ENCODE measurements at regions of chr9 and their contacts with region 1.

Region 1: GRCh38 chr9:37903647-37904444 is at the start of gene SLC25A51:
- ATAC-seq: peak; percentile 68 to 94 (median 92)
- H3K4me3 ChIP-seq: peak within 1 kb of the TSS; percentile 61 to 98 (median 65)
- H3K27ac ChIP-seq: peak within 1 kb of the TSS; percentile 71 to 81
- H3K4me1 ChIP-seq: peaks cover 9 to 12% of the 10 kb centered on the region in 2 donors
- total RNA-seq, gene SLC25A51: 23.9 to 40.0 (median 29.5) TPM

Region 2: GRCh38 chr9:37485389-37486219 is 418.2 kb before region 1 on chr9 and contains the start of gene POLR1E:
- in situ Hi-C with region 1: loop called in 1 of 9 experiments (anchors 25 kb)
- ATAC-seq: peak; percentile 85 to 96 (median 94)
- H3K4me3 ChIP-seq: peak within 1 kb of the TSS; percentile 49 to 65 (median 57)
- H3K27ac ChIP-seq: peak within 1 kb of the TSS in 1 of 2 donors; percentile 2
- H3K4me1 ChIP-seq: peaks cover 11 to 13% of the 10 kb centered on the region in 2 donors
- total RNA-seq, gene POLR1E: 19.4 to 35.4 (median 24.9) TPM

Region 3: DNA sequence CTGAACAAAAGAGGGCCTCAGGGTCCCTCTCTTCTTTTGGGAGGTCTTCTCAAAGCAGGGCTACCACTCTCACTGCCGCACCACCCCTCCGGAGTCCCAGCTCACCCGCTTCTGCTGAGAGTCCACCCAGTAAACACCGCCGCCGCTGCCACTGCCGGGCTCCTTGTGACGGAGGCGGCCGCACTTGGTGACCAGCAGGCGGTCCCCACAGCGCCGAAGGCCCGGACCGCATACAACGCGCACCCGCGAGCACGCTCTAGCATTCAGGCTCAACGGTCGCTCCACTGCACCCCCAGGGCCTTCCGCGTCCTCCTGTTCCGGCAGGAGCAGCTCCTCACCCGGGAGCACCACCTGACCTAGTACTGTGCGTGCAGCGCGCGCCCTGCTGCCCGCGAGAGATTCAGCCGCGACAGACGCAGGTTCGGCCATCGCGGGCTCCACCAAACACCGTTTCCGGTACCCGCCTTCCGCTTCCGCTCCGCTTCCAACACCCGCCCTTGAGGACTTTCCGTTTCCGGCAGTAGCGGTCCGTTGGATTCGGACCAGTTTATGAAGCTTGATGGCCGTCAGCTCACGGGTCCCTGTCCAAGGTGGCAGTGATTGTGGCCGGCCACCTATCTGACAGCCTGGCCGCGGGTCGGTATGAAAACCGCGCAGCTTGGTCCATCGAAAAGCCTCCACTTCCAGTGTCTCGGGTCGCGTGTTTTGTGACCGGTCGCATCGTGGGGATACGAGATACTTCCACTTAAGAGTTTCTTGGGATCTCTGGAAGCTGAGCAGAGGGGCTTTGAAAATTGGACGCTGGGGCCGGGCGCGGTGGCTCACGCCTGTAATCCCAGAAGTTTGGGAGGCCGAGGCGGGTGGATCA is 119.0 kb before region 1 on chr9 and contains the start of gene EXOSC3:
- in situ Hi-C with region 1: loop called in 1 of 9 experiments (anchors 25 kb)
- ATAC-seq: peak; percentile 91 to 98 (median 96)
- H3K4me3 ChIP-seq: peak within 1 kb of the TSS; percentile 79 to 89 (median 82)
- H3K27ac ChIP-seq: peak within 1 kb of the TSS; percentile 76 to 90
- H3K4me1 ChIP-seq: peaks cover 7 to 17% of the 10 kb centered on the region in 2 donors
- total RNA-seq, gene EXOSC3: 24.7 to 57.2 (median 43.2) TPM

Region 4: DNA sequence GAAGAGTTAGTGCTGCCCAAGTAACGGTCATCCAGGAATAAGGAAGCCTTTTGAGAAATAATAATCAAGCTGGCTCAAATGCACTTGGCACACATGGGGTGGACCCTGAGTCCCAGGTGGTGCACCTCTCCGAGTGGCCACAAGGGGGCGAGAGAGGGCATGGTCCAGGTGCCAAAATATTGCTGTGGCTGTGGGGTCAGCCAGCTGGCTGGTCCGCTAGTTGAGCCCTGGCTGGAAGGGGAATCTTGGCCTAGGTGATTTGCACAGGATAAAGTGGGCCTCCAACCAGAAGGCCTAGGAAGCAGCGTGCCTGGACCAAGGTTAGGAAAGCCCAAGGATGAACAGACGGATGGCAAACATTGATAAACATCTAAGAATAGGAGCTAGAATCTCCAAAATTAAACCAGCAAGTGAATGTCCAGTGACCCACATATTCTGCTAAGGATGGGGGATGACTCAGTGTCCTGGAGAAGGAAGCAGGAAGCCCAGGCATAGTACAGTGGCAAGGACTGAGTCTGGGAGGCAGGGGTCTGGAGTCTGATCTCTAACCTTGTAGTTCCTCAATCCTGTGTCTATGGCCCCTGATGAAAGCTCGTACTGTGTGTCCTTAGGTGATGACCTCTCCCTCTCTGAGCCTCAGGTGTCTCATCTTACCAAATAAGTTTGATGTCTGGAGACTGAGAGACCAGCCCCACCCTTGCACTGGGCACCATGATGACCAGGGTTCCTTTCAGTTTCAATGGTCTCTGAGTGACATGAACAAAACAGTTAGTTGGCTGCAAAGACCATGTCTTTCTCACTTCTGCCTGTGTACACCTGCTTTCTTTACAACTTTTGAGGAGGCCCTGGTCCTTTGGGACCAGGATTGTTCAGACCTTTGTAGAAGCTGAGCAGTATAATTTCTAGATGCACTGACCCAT is 184.4 kb after region 1 on chr9:
- in situ Hi-C with region 1: loop called in 1 of 9 experiments (anchors 25 kb)
- ATAC-seq: peak; percentile 58 to 90 (median 68)
- H3K4me3 ChIP-seq: no peak overlapping the region
- H3K27ac ChIP-seq: no peak overlapping the region
- H3K4me1 ChIP-seq: peaks cover 16 to 17% of the 10 kb centered on the region in 2 donors

Region 5: GRCh38 chr9:38133595-38133994 is 229.7 kb after region 1 on chr9:
- in situ Hi-C with region 1: no loop called
- ATAC-seq: no peak
- H3K4me3 ChIP-seq: no peak overlapping the region
- H3K27ac ChIP-seq: no peak overlapping the region
- H3K4me1 ChIP-seq: peaks cover 0 to 9% of the 10 kb centered on the region in 2 donors

Region 6: GRCh38 chr9:38417003-38417945 is 513.4 kb after region 1 on chr9:
- in situ Hi-C with region 1: loop called in 1 of 9 experiments (anchors 25 kb)
- ATAC-seq: peak in 3 of 8 experiments; percentile 49 to 60 (median 51)
- H3K4me3 ChIP-seq: no peak overlapping the region
- H3K27ac ChIP-seq: no peak overlapping the region
- H3K4me1 ChIP-seq: peaks cover 58 to 76% of the 10 kb centered on the region in 2 donors

Measured in motor neuron (in vitro differentiated cells).